ENCODE measurements at regions of chrX and their contacts with region 1.

Region 1: GRCh38 chrX:130741584-130741983 is 161.4 kb downstream of the ENOX2 start:
- DNase-seq: no peak
- ATAC-seq: no peak
- H3K4me3 Mint-ChIP-seq: no peak overlapping the region
- H3K27ac Mint-ChIP-seq: no peak overlapping the region
- H3K4me1 Mint-ChIP-seq: peaks cover 26% of the 10 kb centered on the region
- H3K27me3 Mint-ChIP-seq: peaks cover 27% of the 10 kb centered on the region
- CTCF ChIP-seq: no peak

Region 2: GRCh38 chrX:129553619-129554288 is 1187.8 kb before region 1 on chrX:
- CTCF ChIA-PET with region 1: no interaction called
- POLR2A ChIA-PET with region 1: interaction called, 19 read pairs
- DNase-seq: no peak
- ATAC-seq: no peak
- H3K4me3 Mint-ChIP-seq: no peak overlapping the region
- H3K27ac Mint-ChIP-seq: no peak overlapping the region
- H3K4me1 Mint-ChIP-seq: no peaks in the 10 kb centered on the region
- H3K27me3 Mint-ChIP-seq: no peaks in the 10 kb centered on the region
- CTCF ChIP-seq: no peak

Region 3: DNA sequence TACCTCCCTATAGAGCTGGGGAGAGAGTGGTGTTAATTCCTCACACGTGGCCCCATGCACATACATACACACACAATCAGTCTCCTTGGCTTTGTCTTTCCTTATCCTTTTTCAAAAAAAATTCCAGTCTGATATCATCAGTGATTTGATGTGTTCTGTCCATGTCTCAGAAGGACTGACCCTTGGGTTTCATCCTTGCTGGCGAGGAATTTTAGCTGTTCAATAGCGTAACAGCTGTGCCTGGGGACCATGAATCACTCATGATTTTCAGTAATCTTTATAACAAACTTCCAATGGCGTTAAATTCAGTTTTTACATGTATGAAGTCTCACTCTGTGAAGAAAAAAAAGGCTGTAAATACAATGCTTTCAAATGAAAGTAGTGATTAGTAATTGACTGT is 135.2 kb before region 1 on chrX:
- CTCF ChIA-PET with region 1: no interaction called
- POLR2A ChIA-PET with region 1: no interaction called
- DNase-seq: no peak
- ATAC-seq: no peak
- H3K4me3 Mint-ChIP-seq: no peak overlapping the region
- H3K27ac Mint-ChIP-seq: no peak overlapping the region
- H3K4me1 Mint-ChIP-seq: peaks cover 6% of the 10 kb centered on the region
- H3K27me3 Mint-ChIP-seq: no peaks in the 10 kb centered on the region; the same call in 1 of the 2 replicates
- CTCF ChIP-seq: no peak

Region 4: GRCh38 chrX:130714135-130714534 is 27.4 kb before region 1 on chrX:
- CTCF ChIA-PET with region 1: no interaction called
- POLR2A ChIA-PET with region 1: no interaction called
- DNase-seq: no peak
- ATAC-seq: no peak
- H3K4me3 Mint-ChIP-seq: no peak overlapping the region
- H3K27ac Mint-ChIP-seq: no peak overlapping the region
- H3K4me1 Mint-ChIP-seq: peaks cover 29% of the 10 kb centered on the region
- H3K27me3 Mint-ChIP-seq: peaks cover 9% of the 10 kb centered on the region; the same call in 1 of the 2 replicates
- CTCF ChIP-seq: no peak

Measured in WTC11 (cell line).